ENCODE measurements at regions of chr1 and their contacts with region 1.

Region 1: GRCh38 chr1:32876341-32877210 is 5.9 kb upstream of the FNDC5 start:
- DNase-seq: peak in 1 of 2 experiments; percentile 89
- H3K4me3 ChIP-seq: peak overlapping the region in 1 of 4 experiments; percentile 25; a peak in 1 of 8 replicates
- H3K27ac ChIP-seq: no peak overlapping the region
- H3K4me1 ChIP-seq: peaks cover 6 to 30% (median 15%) of the 10 kb centered on the region in 4 experiments
- H3K27me3 ChIP-seq: peaks cover 0 to 7% (median 7%) of the 10 kb centered on the region in 4 experiments; a peak in 6 of 7 replicates
- CTCF ChIP-seq: peak; percentile 93 to 99 (median 99)
- EP300 ChIP-seq: no peak
- POLR2A ChIP-seq: no peak
- RAD21 ChIP-seq: peak; percentile 62 to 75

Region 2: DNA sequence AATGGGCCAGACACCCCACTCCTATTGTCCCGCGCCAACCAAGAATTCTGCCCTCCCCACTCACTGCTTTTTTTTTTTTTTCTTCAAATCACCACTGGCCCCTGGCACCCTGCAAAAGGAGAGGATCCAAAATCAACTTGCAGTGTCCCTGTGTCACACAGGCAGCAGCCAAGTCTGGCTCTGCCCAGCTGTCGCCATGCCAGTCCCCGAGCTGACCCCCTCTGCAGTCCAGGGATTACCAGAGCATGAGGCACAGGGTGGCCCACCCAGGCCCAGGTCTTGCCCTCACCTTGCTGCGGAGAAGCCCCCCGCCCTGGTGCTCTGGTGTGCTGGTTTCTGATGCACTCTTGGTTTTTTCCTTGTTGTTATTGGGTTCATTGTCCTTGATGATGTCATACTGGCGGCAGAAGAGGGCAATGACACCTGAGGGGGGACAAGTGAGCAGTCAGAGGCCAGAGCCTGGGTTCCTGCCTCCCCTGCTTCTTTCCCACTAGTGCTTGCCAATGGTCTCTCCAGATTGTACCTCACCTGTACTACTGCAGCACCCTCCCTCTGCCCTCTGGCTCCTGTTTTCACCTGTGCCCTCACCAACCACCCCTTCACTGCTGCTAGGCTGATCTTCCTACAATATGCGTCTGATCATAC is 12.1 kb before region 1 on chr1:
- CTCF ChIA-PET with region 1: interaction called, 11 read pairs
- POLR2A ChIA-PET with region 1: interaction called, 6 read pairs
- DNase-seq: no peak
- H3K4me3 ChIP-seq: no peak overlapping the region
- H3K27ac ChIP-seq: no peak overlapping the region
- H3K4me1 ChIP-seq: peaks cover 0 to 1% (median under 1%) of the 10 kb centered on the region in 4 experiments; a peak in 3 of 7 replicates
- H3K27me3 ChIP-seq: peaks cover 0 to 11% (median 5%) of the 10 kb centered on the region in 4 experiments; a peak in 6 of 7 replicates
- CTCF ChIP-seq: no peak
- EP300 ChIP-seq: no peak
- POLR2A ChIP-seq: no peak
- RAD21 ChIP-seq: no peak

Measured in H1 (cell line).